Cardiac septum (tissue), 1 donor: ENCODE measurements at regions of chr19 and their contacts with region 1.

Region 1: GRCh38 chr19:54738715-54739114 is 402 bp downstream of the KIR2DL3 start:
- DNase-seq: no peak

Region 2: DNA sequence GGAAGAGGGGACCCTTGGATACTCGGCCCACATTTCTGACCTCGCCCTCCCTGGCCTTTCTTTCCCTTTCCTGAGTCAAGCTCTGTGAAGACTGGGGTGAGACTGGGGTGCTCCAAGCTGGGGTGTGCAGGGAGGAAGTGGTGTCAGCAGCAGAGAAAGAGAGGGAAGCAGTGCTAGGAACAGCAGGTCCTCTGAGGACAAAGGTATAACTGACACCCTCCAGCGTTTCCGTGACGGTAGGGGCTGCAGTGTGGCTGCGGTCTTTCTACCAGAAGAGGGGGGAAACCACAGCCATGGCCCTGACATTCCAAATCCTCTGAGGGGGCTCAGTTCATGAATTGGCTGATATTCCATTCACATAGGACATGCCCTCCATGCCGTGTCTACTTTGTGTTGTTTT is 112.6 kb after region 1 on chr19:
- intact Hi-C with region 1: loop called (anchors 5 kb)
- DNase-seq: no peak